PC-3 (cell line): ENCODE measurements at regions of chr18 and their contacts with region 1.

Region 1: DNA sequence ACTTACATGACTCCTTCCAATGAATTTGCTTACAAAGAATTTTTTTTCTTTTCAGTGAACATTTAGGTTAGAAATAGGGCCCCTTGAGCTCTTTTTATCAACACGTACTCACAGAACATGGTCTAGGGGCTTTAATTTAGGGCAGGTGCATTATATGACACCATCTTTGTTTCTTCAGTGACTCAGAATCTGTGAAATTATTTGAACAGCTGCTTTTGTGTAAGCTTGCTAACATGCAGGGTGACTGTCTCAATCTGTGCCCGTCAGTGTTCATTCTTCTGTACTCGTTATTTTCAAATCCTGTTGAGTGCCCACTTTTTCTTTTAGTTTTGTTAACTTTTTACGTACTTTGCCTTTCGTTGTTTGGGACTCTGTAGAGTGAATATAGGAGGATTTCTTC is 52.8 kb upstream of the CABYR start:
- DNase-seq: peak; percentile 33
- ATAC-seq: peak; percentile 61
- H3K4me3 ChIP-seq: no peak overlapping the region
- H3K27ac ChIP-seq: no peak overlapping the region
- H3K4me1 ChIP-seq: peaks cover 8% of the 10 kb centered on the region; the same call in 1 of the 2 replicates
- H3K27me3 ChIP-seq: no peaks in the 10 kb centered on the region
- CTCF ChIP-seq: no peak

Region 2: DNA sequence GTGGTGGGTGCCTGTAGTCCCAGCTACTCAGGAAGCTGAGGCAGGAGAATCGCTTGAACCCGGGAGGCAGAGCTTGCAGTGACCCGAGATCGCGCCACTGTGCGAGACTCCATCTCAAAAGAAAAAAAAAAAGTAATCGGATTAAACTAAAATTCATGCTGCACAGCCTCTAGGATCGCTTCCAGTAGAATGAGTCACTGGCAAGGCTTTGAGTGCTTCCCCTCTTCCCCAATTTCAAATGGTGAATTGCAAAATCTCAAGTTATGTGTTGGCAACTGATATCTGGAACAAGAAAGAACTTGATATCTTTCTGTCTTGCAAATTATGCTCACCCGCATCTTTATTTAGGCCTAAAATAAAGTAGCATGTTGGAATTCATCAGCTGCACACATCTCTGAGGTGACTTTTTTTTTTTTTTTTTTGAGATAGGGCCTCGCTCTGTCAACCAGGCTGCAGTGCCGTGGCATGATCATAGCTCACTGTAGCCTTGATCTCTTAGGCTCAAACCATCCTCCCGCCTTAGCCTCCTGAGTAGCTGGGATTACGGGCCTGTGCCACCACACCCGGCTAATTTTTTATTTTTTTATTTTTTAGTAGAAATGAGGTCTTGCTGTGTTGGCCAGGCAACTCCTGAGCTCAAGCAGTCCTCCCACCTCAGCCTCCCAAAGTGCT is 58.8 kb before region 1 on chr18:
- CTCF ChIA-PET with region 1: interaction called, 16 read pairs
- POLR2A ChIA-PET with region 1: no interaction called
- intact Hi-C with region 1: no loop called
- DNase-seq: peak; percentile 84
- ATAC-seq: peak; percentile 76
- H3K4me3 ChIP-seq: no peak overlapping the region; the same call in 1 of the 2 replicates
- H3K27ac ChIP-seq: peak overlapping the region; percentile 9
- H3K4me1 ChIP-seq: peaks cover 42% of the 10 kb centered on the region
- H3K27me3 ChIP-seq: no peaks in the 10 kb centered on the region
- CTCF ChIP-seq: no peak